Activated CD8-positive, alpha-beta T cell treated with anti-CD3 and anti-CD28 coated beads, Interleukin-2, amount 10 ng/mL, durations not matched to agents 7 days and 5 days (primary cell): ENCODE measurements at regions of chr11 and their contacts with region 1.

Region 1: DNA sequence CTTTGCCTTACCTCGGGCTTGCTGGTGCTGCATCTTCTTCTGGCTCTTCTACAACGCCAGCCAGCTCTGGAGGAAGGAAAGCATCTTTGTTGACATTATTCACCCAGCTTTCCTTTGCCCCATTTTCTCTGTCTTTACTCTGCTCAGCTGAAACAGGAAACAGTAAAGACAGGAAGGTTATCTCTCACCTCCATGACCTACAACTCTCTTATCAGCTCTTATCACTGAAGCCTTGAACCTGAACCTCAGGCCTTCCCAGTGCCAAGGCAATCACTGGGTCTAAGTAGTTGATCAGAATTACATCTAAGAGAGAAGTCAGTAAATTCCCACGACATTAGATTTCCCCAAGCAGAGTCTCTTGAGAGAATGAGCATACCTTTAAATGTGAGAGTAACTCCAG is 59.6 kb upstream of the CCDC89 start:
- DNase-seq: no peak
- ATAC-seq: peak; percentile 38
- H3K4me3 Mint-ChIP-seq: no peak overlapping the region
- H3K27ac Mint-ChIP-seq: peak overlapping the region; percentile 59
- H3K4me1 Mint-ChIP-seq: peaks cover 82% of the 10 kb centered on the region
- H3K27me3 Mint-ChIP-seq: no peaks in the 10 kb centered on the region

Region 2: DNA sequence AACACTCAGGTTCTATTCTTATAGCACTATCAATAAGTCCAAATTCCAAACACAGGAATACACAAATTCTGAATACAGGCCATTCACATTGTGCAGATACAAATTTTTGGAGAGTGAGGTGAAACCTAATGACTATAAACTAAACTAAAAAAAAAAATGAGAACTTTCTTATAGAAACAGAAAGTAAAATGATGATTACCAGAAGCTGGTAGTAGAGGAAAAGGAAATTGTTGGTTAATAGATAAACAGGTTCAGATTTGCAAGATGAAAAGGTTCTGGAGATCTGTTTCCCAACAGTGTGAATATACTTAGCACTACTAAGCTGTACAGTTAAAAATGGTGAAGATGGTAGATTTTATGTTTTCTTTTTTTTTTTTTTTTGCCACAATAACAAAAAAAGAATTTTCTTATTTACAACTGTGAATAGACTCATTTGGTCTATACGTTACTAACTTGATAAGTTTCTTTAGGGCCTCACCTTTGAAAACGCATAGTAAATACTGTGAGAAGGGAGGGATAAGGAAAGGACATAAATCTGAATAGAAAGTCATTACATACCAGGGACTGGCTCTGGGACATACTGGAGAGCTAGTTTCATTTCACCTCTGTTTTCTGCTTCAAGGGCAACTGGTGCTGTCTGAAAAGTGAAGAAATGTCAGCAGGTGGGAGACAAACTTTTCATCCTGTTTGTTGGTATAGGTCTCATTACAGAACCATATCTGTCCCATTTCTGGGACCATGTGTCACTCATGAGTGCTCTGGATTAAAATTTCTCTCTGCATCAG is 45.5 kb before region 1 on chr11:
- CTCF ChIA-PET with region 1: interaction called, 10 read pairs
- POLR2A ChIA-PET with region 1: no interaction called
- DNase-seq: no peak
- ATAC-seq: peak; percentile 84
- H3K4me3 Mint-ChIP-seq: peak overlapping the region; percentile 1
- H3K27ac Mint-ChIP-seq: peak overlapping the region; percentile 31
- H3K4me1 Mint-ChIP-seq: peaks cover 42% of the 10 kb centered on the region
- H3K27me3 Mint-ChIP-seq: no peaks in the 10 kb centered on the region

Region 3: DNA sequence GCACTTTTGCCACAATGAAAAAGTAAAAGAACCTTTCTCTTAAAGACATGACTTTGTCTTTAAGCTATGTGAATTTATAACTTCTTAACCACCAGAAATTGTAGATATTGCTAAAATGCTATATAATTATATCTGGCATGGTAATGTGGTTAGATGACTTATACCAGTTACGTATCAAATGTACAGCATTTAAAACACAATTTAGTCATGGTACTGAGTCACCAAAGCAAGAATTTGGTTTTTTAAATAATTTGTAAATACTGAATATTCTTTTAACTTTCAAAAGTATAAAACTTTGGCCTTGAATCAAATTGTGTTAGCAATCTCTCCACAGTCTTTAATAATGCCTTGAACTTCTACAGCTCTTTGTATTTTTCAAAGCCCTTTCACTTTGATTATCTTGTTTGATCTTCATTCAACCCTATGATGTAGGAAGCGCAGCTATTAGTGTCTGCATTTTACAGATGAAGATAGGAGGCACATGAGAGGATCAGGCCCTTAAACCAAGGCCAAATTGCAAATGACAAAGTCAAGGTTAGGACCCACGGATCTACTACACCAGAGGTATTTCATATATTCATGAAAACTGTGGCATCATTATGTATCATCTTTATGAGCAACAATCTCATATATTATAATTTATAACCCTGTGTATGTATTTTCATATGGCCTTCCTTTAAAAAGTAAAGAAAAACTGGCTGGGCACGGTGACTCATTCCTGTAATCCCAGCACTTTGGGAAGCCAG is 69.7 kb after region 1 on chr11:
- CTCF ChIA-PET with region 1: no interaction called
- POLR2A ChIA-PET with region 1: no interaction called
- DNase-seq: no peak
- ATAC-seq: no peak
- H3K4me3 Mint-ChIP-seq: no peak overlapping the region
- H3K27ac Mint-ChIP-seq: no peak overlapping the region
- H3K4me1 Mint-ChIP-seq: peaks cover 15% of the 10 kb centered on the region
- H3K27me3 Mint-ChIP-seq: peaks cover 25% of the 10 kb centered on the region